T-cell (primary cell): ENCODE measurements at regions of chr5 and their contacts with region 1.

Region 1: DNA sequence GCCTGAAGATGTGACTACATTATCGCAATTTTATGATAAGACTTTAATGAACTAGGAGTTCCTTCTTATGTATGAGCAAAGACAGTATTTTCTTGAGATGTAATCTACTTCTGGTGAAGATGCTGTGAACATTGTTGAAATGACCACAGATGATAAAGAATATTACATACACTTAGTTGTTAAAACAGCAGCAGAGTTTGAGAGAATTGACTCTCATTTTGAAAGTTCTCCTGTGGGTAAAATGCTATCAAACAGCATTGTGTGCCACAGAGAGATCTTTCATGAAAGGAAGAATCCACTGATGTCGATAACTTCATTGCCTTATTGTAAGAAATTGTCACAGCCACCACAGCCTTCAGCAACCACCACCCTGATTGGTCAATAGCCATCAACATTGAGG is 8.0 kb downstream of the FAM151B start:
- DNase-seq: no peak
- ATAC-seq: no peak
- H3K4me3 ChIP-seq: no peak overlapping the region
- H3K4me3 Mint-ChIP-seq: no peak overlapping the region
- H3K27ac ChIP-seq: no peak overlapping the region
- H3K27ac Mint-ChIP-seq: no peak overlapping the region
- H3K4me1 ChIP-seq: no peaks in the 10 kb centered on the region
- H3K4me1 Mint-ChIP-seq: no peaks in the 10 kb centered on the region
- H3K27me3 ChIP-seq: peaks cover 0 to 7% of the 10 kb centered on the region in 2 experiments
- H3K27me3 Mint-ChIP-seq: peaks cover 0 to 4% of the 10 kb centered on the region in 2 donors

Region 2: GRCh38 chr5:80466669-80467485 is 29.0 kb before region 1 on chr5:
- CTCF ChIA-PET with region 1: no interaction called
- POLR2A ChIA-PET with region 1: no interaction called
- DNase-seq: no peak
- ATAC-seq: no peak
- H3K4me3 ChIP-seq: no peak overlapping the region
- H3K4me3 Mint-ChIP-seq: no peak overlapping the region
- H3K27ac ChIP-seq: no peak overlapping the region
- H3K27ac Mint-ChIP-seq: no peak overlapping the region
- H3K4me1 ChIP-seq: no peaks in the 10 kb centered on the region
- H3K4me1 Mint-ChIP-seq: no peaks in the 10 kb centered on the region
- H3K27me3 ChIP-seq: no peaks in the 10 kb centered on the region
- H3K27me3 Mint-ChIP-seq: no peaks in the 10 kb centered on the region

Region 3: GRCh38 chr5:81675846-81676245 is 1180.0 kb after region 1 on chr5:
- CTCF ChIA-PET with region 1: no interaction called
- POLR2A ChIA-PET with region 1: interaction called in 1 of 2 experiments, 15 read pairs
- DNase-seq: no peak
- ATAC-seq: no peak
- H3K4me3 ChIP-seq: no peak overlapping the region
- H3K4me3 Mint-ChIP-seq: no peak overlapping the region
- H3K27ac ChIP-seq: no peak overlapping the region
- H3K27ac Mint-ChIP-seq: no peak overlapping the region
- H3K4me1 ChIP-seq: no peaks in the 10 kb centered on the region
- H3K4me1 Mint-ChIP-seq: peaks cover 21 to 30% (median 25%) of the 10 kb centered on the region in 3 donors
- H3K27me3 ChIP-seq: no peaks in the 10 kb centered on the region
- H3K27me3 Mint-ChIP-seq: no peaks in the 10 kb centered on the region